ENCODE measurements at regions of chr12 and their contacts with region 1.

Region 1: DNA sequence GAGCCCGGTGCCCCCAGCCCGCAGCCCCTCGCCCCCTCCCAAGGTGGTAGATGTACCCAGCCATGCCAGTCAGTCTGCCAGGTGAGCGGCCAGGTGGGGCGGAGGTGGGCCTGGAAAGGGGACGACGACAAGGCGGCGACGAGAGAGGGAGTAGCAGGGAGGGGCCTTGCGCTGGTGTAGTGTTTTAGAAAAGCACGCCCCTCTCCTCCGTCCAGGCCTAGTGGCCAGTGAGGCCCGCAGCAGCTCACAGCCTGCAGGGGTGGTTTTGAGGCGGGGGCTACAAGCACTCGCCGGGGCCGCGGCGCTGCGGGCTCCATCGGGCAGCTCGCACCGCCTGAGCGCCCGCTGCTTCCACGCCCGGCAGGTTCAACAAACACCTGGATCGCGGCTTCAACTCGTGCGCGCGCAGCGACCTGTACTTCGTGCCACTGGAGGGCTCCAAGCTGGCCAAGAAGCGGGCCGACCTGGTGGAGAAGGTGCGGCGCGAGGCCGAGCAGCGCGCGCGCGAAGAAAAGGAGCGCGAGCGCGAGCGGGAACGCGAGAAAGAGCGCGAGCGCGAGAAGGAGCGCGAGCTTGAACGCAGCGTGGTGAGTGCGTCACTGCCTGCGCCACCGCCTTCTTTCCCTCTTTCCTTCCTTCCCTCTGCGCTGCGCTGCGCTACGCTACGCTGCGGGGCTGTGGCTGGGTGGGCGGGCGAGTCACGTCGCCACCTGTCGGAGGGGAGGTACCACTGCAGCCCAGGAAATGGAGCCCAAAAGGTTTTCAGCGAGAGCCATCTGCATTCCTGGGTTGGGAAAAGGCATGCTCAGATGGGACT is 5.9 kb upstream of the RNU7-1 start:
- DNase-seq: peak; percentile 92 to 97
- H3K4me3 ChIP-seq: peak overlapping the region; percentile 62
- H3K27ac ChIP-seq: peak overlapping the region; percentile 52
- H3K4me1 ChIP-seq: peaks cover 8% of the 10 kb centered on the region
- H3K27me3 ChIP-seq: no peaks in the 10 kb centered on the region
- CTCF ChIP-seq: peak; percentile 98

Region 2: GRCh38 chr12:6927379-6928024 is 10.2 kb before region 1 on chr12 and contains the start of gene ATN1:
- CTCF ChIA-PET with region 1: interaction called, 38 read pairs
- POLR2A ChIA-PET with region 1: interaction called, 8 read pairs
- intact Hi-C with region 1: no loop called
- DNase-seq: peak in 1 of 2 experiments; percentile 66
- H3K4me3 ChIP-seq: peak within 1 kb of the TSS; percentile 85
- H3K27ac ChIP-seq: peak within 1 kb of the TSS; percentile 75
- H3K4me1 ChIP-seq: peaks cover 53% of the 10 kb centered on the region
- H3K27me3 ChIP-seq: no peaks in the 10 kb centered on the region
- CTCF ChIP-seq: no peak
- total RNA-seq, gene ATN1: 158 and 159 TPM in 2 replicates

Region 3: GRCh38 chr12:7162691-7163114 is 225.0 kb after region 1 on chr12:
- CTCF ChIA-PET with region 1: no interaction called
- POLR2A ChIA-PET with region 1: interaction called, 11 read pairs
- intact Hi-C with region 1: no loop called
- DNase-seq: peak; percentile 55 to 69
- H3K4me3 ChIP-seq: no peak overlapping the region
- H3K27ac ChIP-seq: no peak overlapping the region
- H3K4me1 ChIP-seq: no peaks in the 10 kb centered on the region
- H3K27me3 ChIP-seq: no peaks in the 10 kb centered on the region
- CTCF ChIP-seq: peak; percentile 82

Region 4: GRCh38 chr12:7970475-7971252 is 1033.0 kb after region 1 on chr12:
- CTCF ChIA-PET with region 1: no interaction called
- POLR2A ChIA-PET with region 1: no interaction called
- intact Hi-C with region 1: no loop called
- DNase-seq: peak; percentile 90 to 98
- H3K4me3 ChIP-seq: peak overlapping the region; percentile 58
- H3K27ac ChIP-seq: peak overlapping the region; percentile 65
- H3K4me1 ChIP-seq: peaks cover 18% of the 10 kb centered on the region
- H3K27me3 ChIP-seq: no peaks in the 10 kb centered on the region
- CTCF ChIP-seq: no peak

Measured in PC-9 (cell line).